Naive thymus-derived CD4-positive, alpha-beta T cell (primary cell): ENCODE measurements at regions of chr6 and their contacts with region 1.

Region 1: DNA sequence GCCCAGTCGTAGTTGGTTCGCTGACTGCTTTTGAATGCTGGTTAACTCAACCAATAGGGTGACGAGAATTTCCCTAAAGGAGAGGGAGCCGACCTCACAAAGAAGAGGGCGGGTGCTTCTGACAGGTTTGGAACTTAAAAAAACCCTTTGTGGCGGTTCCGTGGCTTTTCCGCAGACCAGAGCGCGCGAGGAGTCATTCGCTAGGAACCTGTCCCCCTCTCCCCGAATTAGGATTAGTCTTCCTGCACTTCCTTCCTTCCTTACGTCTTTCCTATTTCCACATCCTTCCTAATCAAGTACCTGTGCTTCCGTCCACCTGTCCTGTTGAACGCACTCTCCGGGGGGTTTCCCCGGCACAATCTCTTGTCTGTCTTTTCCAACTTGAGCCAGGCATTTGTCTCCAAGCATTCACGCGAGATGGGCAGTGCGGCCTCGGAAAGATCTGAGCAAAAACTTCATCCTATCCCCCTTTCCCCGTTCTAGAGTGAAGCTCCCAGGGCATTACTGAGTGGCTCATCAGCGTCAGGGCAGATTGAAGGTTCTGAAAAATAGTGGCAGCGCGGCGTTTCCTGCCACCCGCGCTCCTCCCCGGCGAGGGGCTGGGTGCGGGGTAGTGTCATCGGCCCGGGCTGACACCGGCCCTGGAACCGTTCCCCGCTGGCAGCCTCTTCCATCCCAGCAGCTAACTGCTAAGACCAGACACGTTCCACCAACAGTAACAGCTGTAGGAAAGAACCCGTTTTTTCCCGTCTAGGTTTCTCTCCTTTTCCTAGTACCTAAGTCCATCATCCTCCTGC is 1.5 kb upstream of the STXBP5 start:
- DNase-seq: peak; percentile 39 to 94 (median 90)
- ATAC-seq: peak; percentile 90
- H3K4me3 ChIP-seq: peak overlapping the region; percentile 84
- H3K4me3 Mint-ChIP-seq: peak overlapping the region; percentile 91 to 100 (median 99)
- H3K27ac ChIP-seq: peak overlapping the region; percentile 90
- H3K27ac Mint-ChIP-seq: peak overlapping the region; percentile 92 to 99 (median 98)
- H3K4me1 ChIP-seq: peaks cover 4% of the 10 kb centered on the region in 2 donors
- H3K4me1 Mint-ChIP-seq: peaks cover 17 to 40% (median 35%) of the 10 kb centered on the region in 7 donors
- H3K27me3 ChIP-seq: no peaks in the 10 kb centered on the region
- H3K27me3 Mint-ChIP-seq: no peaks in the 10 kb centered on the region

Region 2: DNA sequence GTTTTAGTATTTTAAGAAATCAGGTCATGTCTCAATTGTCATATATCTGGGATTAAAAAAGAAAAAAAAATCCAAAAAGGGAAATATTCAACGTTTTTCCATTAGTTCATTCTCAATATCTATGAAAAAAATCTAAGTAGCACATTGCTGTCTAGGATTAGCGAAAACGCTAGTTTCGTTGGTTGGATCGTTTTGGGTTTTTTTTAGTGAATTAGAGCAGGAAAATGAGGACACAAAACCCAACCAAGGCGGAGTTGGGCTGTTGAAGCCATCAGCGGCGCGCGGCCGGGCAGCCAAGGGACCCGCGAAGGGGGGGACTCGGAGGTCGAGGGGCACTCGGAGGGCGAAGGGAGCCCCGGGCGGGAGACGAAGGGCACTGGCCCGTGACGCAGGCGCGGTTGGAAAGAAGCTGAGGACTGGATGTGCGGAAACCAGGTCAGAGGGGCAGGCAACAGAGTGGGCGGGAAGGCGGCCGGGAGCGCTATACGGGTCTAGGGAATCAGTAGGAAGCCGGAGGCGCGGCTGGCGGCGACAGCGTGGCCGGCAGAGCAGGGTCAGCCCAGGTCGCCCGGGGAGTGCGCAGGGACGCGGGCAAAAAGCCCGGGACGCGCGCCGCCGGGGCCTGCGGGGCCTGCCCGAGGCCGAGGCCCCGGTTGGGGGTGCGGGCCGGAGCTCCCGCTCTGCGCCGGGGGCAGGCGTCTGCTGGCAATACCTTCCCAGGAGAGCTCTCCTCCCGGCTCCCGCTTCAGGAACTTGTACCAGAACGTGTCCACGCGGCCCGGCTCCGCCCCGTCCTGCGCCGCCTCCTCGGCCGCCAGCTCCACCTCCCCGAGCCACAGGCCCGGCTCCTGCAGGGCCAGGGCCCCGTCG is 1468.0 kb before region 1 on chr6:
- CTCF ChIA-PET with region 1: no interaction called
- POLR2A ChIA-PET with region 1: no interaction called
- intact Hi-C with region 1: loop called (anchors 1 to 10 kb)
- DNase-seq: peak; percentile 50 to 78 (median 64)
- ATAC-seq: peak; percentile 79
- H3K4me3 ChIP-seq: peak overlapping the region; percentile 65
- H3K4me3 Mint-ChIP-seq: peak overlapping the region; percentile 87 to 100 (median 98)
- H3K27ac ChIP-seq: peak overlapping the region; percentile 92
- H3K27ac Mint-ChIP-seq: peak overlapping the region; percentile 90 to 99 (median 97)
- H3K4me1 ChIP-seq: peaks cover 0 to 5% of the 10 kb centered on the region in 2 donors
- H3K4me1 Mint-ChIP-seq: peaks cover 0 to 29% (median 9%) of the 10 kb centered on the region in 7 donors
- H3K27me3 ChIP-seq: no peaks in the 10 kb centered on the region
- H3K27me3 Mint-ChIP-seq: no peaks in the 10 kb centered on the region

Region 3: GRCh38 chr6:145963216-145964068 is 1239.3 kb before region 1 on chr6:
- CTCF ChIA-PET with region 1: no interaction called
- POLR2A ChIA-PET with region 1: interaction called, 4 read pairs
- intact Hi-C with region 1: loop called (anchors 2 kb)
- DNase-seq: peak in 6 of 9 donors; percentile 20 to 44 (median 30)
- ATAC-seq: peak; percentile 11
- H3K4me3 ChIP-seq: peak overlapping the region; percentile 88
- H3K4me3 Mint-ChIP-seq: peak overlapping the region; percentile 90 to 99 (median 98)
- H3K27ac ChIP-seq: peak overlapping the region; percentile 84
- H3K27ac Mint-ChIP-seq: peak overlapping the region; percentile 91 to 100 (median 98)
- H3K4me1 ChIP-seq: peaks cover 20 to 26% of the 10 kb centered on the region in 2 donors
- H3K4me1 Mint-ChIP-seq: peaks cover 30 to 72% (median 56%) of the 10 kb centered on the region in 7 donors
- H3K27me3 ChIP-seq: no peaks in the 10 kb centered on the region
- H3K27me3 Mint-ChIP-seq: no peaks in the 10 kb centered on the region

Region 4: DNA sequence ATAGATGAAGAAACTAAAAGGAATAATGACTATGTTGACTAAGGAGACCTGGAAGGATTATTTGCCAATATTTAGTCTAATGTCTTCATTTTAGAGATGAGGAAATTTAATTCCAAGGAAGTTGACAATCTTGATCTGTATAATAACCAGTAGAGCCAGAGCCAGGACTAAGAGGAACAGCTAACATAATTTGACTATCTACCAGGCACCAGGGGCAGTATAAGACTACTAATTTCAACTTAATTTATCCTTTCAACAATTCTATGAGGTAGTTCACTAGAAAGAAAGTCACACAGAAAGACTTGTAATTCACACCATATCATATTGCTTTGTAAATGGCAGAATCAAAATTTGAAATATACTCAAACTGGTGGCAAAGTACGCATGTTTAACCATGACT is 271.5 kb before region 1 on chr6:
- CTCF ChIA-PET with region 1: no interaction called
- POLR2A ChIA-PET with region 1: no interaction called
- intact Hi-C with region 1: loop called in 1 of 2 experiments (anchors 5 kb)
- DNase-seq: peak in 5 of 9 donors; percentile 4 to 18 (median 12)
- ATAC-seq: no peak
- H3K4me3 ChIP-seq: no peak overlapping the region
- H3K4me3 Mint-ChIP-seq: no peak overlapping the region
- H3K27ac ChIP-seq: no peak overlapping the region
- H3K27ac Mint-ChIP-seq: no peak overlapping the region
- H3K4me1 ChIP-seq: no peaks in the 10 kb centered on the region
- H3K4me1 Mint-ChIP-seq: peaks cover 0 to 4% (median 0%) of the 10 kb centered on the region in 7 donors
- H3K27me3 ChIP-seq: no peaks in the 10 kb centered on the region
- H3K27me3 Mint-ChIP-seq: peaks cover 0 to 4% (median 0%) of the 10 kb centered on the region in 5 donors

Region 5: GRCh38 chr6:147216915-147217314 is 14.2 kb after region 1 on chr6:
- CTCF ChIA-PET with region 1: interaction called, 4 read pairs
- POLR2A ChIA-PET with region 1: interaction called, 10 read pairs
- intact Hi-C with region 1: loop called (anchors 1 to 2 kb)
- DNase-seq: no peak
- ATAC-seq: no peak
- H3K4me3 ChIP-seq: no peak overlapping the region
- H3K4me3 Mint-ChIP-seq: no peak overlapping the region
- H3K27ac ChIP-seq: no peak overlapping the region
- H3K27ac Mint-ChIP-seq: peak overlapping the region in 1 of 9 donors; percentile 5
- H3K4me1 ChIP-seq: peaks cover 0 to 4% of the 10 kb centered on the region in 2 donors
- H3K4me1 Mint-ChIP-seq: peaks cover 12 to 70% (median 50%) of the 10 kb centered on the region in 7 donors
- H3K27me3 ChIP-seq: no peaks in the 10 kb centered on the region
- H3K27me3 Mint-ChIP-seq: no peaks in the 10 kb centered on the region

Region 6: GRCh38 chr6:147285087-147285855 is 82.6 kb after region 1 on chr6:
- CTCF ChIA-PET with region 1: interaction called, 3 read pairs
- POLR2A ChIA-PET with region 1: interaction called, 3 read pairs
- intact Hi-C with region 1: loop called (anchors 1 to 2 kb)
- DNase-seq: peak in 5 of 9 donors; percentile 16 to 34 (median 21)
- ATAC-seq: peak; percentile 52
- H3K4me3 ChIP-seq: no peak overlapping the region
- H3K4me3 Mint-ChIP-seq: peak overlapping the region in 2 of 10 donors; percentile 6 to 38
- H3K27ac ChIP-seq: no peak overlapping the region
- H3K27ac Mint-ChIP-seq: peak overlapping the region in 5 of 9 donors; percentile 0 to 76 (median 11)
- H3K4me1 ChIP-seq: no peaks in the 10 kb centered on the region
- H3K4me1 Mint-ChIP-seq: peaks cover 9 to 32% (median 25%) of the 10 kb centered on the region in 7 donors
- H3K27me3 ChIP-seq: no peaks in the 10 kb centered on the region
- H3K27me3 Mint-ChIP-seq: no peaks in the 10 kb centered on the region